ENCODE measurements at regions of chr11 and their contacts with region 1.

Region 1: GRCh38 chr11:46616998-46617675 is at the starts of genes ATG13 and HARBI1:
- H3K4me3 Mint-ChIP-seq: peak within 1 kb of the TSS; percentile 89
- H3K27ac Mint-ChIP-seq: peak within 1 kb of the TSS; percentile 99
- H3K4me1 Mint-ChIP-seq: peaks cover 33% of the 10 kb centered on the region
- H3K27me3 Mint-ChIP-seq: no peaks in the 10 kb centered on the region

Region 2: DNA sequence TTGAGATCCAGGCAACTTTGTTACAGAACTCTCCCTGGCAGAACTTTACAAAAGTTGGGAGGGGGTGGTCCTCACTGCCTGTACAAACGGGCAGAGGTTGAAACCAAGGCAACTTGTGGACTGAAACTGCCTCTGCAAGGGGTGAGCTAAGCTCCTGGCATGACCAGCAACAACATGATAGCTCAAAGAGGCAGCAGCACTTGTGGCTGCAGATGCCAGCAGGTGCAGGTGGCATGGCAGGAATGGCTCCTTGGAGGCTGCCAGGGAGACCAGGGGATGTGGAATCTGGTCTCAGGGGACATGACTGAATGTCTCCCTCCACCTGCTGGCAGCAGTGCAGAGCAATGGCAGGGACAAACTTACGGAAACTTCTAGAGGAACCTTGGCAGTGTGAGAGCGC is 457.0 kb before region 1 on chr11:
- intact Hi-C with region 1: no loop called
- H3K4me3 Mint-ChIP-seq: no peak overlapping the region
- H3K27ac Mint-ChIP-seq: no peak overlapping the region
- H3K4me1 Mint-ChIP-seq: no peaks in the 10 kb centered on the region
- H3K27me3 Mint-ChIP-seq: peaks cover 25% of the 10 kb centered on the region

Region 3: DNA sequence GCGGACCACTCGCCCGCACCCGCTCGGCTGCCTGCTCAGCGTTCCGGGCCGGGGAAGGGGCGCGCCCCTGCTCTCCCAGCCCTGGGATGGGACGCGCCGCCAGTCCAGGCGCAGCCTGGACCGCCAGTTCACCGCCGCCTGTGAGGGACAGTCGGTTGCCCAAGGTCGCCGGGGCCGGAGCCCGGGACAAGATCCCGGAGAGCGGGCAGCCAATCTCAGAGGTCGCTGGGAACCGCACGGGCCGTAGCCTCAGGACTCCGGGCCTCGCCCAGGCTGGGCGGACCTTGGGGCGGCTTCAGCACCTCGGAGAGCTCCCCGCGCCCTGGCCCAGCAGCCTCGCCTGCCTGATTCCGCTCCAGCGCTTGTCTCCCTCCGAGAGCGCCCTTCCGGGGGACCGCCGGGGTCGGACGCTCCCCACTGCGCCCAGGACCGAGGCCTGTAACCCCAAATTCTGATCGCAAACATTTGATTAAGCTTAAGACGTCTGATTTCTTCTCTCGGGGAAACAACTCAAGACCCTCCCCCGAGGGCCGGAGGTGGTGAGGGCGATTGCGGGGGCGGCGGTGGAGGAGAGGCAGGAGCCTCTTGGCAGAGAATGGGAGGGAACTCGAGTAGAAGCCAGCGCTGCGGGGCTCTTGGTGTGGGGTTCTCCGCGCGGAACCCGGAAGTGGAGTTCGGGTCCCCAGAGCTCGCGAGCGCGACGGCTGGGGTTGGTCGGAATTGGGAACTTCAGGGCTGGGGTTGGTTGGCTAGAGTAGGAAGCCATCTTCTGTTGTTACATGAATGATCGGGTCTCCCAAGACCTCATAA is 224.5 kb before region 1 on chr11:
- intact Hi-C with region 1: loop called (anchors 2 kb)
- H3K4me3 Mint-ChIP-seq: peak overlapping the region; percentile 92
- H3K27ac Mint-ChIP-seq: peak overlapping the region; percentile 38
- H3K4me1 Mint-ChIP-seq: peaks cover 46% of the 10 kb centered on the region
- H3K27me3 Mint-ChIP-seq: peaks cover 58% of the 10 kb centered on the region

Region 4: DNA sequence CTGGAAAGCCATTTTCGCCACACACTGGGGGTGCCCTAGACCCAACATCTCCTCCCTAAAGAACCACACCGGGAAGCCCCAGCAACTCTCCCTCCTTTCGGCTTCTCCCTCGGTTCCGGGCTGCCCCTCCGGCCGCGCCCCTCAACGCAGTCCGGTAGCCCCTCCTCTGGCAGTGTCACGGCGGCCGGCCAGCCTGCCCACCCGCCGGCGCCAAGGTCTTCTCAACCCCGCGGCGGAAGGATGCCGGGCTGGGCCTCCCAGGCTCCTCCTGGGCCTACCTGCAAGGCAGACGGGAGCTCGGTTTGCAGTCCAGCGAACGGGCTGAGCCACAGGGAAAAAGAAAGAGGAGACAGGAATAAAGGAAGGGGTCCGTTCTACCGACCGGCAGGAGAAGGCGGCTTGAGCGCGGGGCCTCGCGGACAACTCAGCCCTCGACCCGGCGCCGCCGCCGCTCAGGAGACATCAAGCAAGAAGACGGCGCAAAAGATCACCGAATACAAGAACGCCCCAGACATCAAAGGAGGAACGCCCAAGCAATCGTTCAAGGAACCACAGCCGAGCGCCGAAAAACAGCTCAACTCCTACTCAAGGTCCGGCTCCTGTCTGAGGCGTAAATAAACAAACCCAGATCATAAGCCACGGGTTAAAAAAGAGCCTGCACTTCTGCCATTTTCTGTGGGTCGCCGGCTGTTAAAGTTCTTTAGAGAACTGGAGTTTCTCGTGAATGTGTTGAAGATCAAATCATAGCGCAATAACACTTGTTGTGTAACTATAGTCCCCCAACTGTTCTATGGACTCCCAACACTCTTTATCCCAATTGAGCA is 23.4 kb before region 1 on chr11 and contains the start of gene AMBRA1:
- intact Hi-C with region 1: loop called (anchors 1 kb)
- H3K4me3 Mint-ChIP-seq: peak within 1 kb of the TSS; percentile 97
- H3K27ac Mint-ChIP-seq: peak within 1 kb of the TSS; percentile 93
- H3K4me1 Mint-ChIP-seq: peaks cover 48% of the 10 kb centered on the region
- H3K27me3 Mint-ChIP-seq: no peaks in the 10 kb centered on the region

Region 5: DNA sequence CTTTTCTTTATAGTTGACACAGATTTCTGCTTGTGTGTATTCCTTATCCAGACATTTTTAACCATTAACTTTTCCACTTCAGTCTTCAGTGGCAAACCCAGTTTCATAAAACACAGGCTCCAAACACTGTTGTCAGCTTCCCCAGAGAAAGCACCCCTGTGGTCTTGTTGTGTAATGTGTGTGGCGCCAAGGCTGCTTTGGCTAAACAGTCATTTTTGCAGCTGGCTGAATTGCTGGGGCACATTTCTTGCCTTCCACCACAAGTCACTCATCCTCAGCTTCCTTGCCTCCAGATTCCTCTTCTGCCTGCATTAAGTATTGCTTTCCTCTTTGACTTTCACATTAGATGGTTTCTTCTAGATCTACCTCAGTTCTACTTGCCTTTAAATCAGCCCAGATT is 42.8 kb after region 1 on chr11:
- intact Hi-C with region 1: no loop called
- H3K4me3 Mint-ChIP-seq: no peak overlapping the region
- H3K27ac Mint-ChIP-seq: no peak overlapping the region
- H3K4me1 Mint-ChIP-seq: peaks cover 12% of the 10 kb centered on the region
- H3K27me3 Mint-ChIP-seq: no peaks in the 10 kb centered on the region

Region 6: DNA sequence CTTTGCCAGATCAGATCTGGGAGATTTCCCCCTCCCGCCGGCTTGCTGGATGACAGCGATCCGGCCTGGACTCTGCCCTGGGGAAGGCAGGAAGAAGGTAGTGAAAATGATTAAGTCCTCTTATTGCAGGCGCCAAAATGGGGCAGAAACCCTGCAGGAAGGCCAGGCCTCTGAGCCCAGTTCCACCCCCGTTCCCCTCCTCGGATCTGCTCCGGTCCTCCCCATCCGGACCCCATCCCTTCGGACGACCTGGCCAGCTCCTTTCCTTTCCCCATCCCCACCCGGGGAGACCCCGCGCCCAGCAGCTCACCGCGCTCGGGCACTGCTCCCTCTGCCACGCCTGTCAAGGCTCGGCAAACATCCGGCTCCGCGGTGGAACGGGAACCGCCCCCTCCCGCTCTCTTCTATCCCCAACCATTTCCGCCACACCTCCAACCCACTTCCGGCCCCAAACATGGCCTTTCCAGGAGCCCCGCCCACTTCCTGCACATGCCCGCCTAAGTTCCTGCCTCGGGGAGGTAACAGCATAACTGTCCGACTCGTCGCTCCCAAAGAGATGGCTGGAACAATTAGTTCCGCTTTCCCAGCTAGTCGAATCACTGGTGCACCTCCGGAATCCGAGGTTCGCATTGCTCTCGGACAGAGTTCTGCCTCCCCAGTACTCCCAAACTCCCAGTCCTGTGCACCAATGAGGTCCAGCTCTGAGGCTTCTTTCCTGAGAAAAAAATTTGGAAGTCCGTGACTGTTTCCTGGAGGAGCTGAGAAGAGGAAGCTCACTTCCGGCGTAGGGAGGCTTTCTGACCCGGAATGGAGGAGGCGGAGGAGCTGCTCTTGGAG is 83.3 kb after region 1 on chr11 and contains the starts of genes ARHGAP1 and ZNF408:
- intact Hi-C with region 1: loop called (anchors 2 kb)
- H3K4me3 Mint-ChIP-seq: peak within 1 kb of the TSS; percentile 95
- H3K27ac Mint-ChIP-seq: peak within 1 kb of the TSS; percentile 99
- H3K4me1 Mint-ChIP-seq: peaks cover 47% of the 10 kb centered on the region
- H3K27me3 Mint-ChIP-seq: no peaks in the 10 kb centered on the region